B cell (primary cell): ENCODE measurements at regions of chr10 and their contacts with region 1.

Region 1: DNA sequence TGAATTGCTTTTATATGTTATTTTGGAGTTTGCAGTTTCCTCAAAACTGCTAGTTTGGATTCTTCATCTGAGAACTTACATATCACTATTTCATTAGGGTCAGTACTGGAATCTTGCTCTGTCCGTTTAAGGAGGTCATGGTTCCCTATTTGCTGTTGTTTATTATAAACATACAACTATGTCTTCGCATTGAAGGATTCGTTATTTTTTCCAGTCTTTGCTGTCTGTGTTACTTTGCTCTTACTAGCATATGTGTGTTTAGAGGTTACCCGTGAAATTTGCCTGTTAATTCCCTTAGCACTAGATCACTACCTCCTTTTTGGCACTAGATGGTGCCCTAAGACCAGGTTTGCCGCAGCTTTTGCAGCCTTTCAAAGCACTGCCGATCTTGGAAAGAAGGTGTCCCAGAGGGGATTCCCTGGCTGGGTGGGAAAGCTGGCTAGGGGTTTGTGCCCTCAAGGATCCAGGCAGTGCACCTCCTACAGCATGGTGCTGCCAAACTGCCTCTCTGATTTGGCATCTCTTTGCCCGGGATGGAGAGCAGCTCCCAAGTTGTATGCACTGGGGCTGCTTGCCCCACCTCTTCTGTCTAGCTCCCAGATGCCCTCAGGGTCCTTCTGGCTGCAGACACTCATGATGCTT is 103.1 kb upstream of the APBB1IP start:
- DNase-seq: peak; percentile 84
- ATAC-seq: peak; percentile 91
- H3K4me3 ChIP-seq: peak overlapping the region; percentile 45 to 66 (median 59)
- H3K4me3 Mint-ChIP-seq: peak overlapping the region; percentile 87
- H3K27ac ChIP-seq: no peak overlapping the region
- H3K27ac Mint-ChIP-seq: peak overlapping the region; percentile 69
- H3K4me1 ChIP-seq: peaks cover 5% of the 10 kb centered on the region in 2 donors
- H3K4me1 Mint-ChIP-seq: peaks cover 6% of the 10 kb centered on the region
- H3K27me3 ChIP-seq: no peaks in the 10 kb centered on the region
- H3K27me3 Mint-ChIP-seq: no peaks in the 10 kb centered on the region
- CTCF ChIP-seq: peak; percentile 95

Region 2: DNA sequence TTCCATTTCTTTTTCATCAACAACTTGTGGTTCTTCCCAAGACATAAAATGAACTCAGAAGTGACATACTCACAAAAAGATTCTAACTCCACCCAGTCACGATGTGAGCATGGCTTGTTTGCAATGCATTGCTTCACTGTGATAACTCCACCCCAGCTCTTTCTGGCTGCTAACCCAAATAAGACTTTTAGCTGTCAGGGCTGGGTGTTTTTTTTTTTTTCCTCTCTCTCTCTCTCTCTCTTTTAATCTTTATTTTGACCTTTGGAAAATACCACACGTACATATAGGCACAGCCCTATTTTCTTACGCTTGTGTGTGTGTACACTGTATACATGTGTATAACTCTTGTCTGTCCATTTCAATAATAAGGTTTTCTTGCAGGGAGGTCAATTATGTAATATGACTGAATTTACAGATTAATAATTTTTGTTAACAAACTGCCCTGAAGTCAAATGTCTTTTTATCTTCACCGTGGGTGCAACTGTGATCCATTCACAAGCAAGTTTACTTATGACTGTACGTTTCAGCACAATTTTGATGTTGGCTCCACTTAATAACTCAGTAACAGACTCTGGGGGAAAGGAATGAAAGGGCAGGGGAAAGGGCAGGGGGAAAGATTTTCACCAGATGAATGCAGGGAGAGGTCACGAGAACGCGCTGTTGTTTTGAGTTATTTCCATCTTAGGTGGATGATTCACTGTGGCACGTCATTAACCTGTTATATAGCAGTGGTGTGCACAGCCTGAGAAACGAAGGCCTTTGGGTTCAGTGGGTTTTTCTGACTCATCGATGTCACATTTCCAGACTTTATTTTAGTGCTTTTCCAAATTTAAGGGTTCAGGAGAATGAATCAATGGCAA is 152.2 kb after region 1 on chr10:
- CTCF ChIA-PET with region 1: no interaction called
- POLR2A ChIA-PET with region 1: no interaction called
- intact Hi-C with region 1: loop called (anchors 5 kb)
- DNase-seq: peak; percentile 24
- ATAC-seq: peak; percentile 78
- H3K4me3 ChIP-seq: no peak overlapping the region
- H3K4me3 Mint-ChIP-seq: peak overlapping the region; percentile 74
- H3K27ac ChIP-seq: peak overlapping the region; percentile 36 to 67
- H3K27ac Mint-ChIP-seq: peak overlapping the region; percentile 89
- H3K4me1 ChIP-seq: peaks cover 40 to 43% of the 10 kb centered on the region in 2 donors
- H3K4me1 Mint-ChIP-seq: peaks cover 54% of the 10 kb centered on the region
- H3K27me3 ChIP-seq: no peaks in the 10 kb centered on the region
- H3K27me3 Mint-ChIP-seq: no peaks in the 10 kb centered on the region
- CTCF ChIP-seq: no peak

Region 3: DNA sequence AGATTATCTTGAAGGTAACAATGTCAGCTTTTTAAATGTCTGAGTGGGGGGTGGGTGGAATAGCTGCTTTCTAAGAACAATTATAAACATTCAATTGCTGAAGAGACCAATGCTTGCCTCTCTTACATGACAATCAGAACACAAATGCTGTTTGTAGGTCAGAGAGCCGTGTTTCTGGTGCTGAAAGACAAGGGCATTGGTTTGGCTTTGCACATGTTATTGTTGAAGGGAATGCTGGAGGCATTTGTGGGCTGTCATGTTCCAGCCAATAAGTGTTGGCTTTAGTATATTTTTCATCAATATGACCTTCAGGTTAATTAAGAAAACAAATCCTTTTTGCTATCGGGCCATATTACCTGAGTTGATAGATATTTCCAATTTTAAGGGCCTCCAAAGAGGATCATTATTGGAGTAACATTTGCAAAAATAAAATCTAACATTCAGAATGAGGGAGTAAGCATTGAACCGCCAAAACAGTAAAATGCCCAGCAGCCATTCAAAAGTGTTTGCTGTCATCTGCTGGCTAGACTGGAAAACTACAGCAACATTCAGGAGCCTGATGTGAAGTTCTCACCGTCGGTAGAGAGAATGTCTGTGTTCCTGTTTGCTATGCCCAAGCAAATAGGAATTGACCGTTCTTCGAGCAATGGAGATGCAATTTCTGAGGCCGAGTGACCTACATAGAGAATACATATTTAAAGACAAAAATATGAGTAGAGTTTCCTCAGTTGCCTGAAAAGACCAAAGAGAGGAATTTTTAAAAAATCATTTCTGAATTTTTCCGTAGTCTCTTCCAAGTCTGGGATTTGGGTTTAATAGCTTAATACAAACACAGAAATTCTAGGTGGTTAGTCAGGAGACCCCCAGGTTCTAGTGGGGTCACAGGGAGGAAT is 221.9 kb after region 1 on chr10:
- CTCF ChIA-PET with region 1: interaction called, 144 read pairs
- POLR2A ChIA-PET with region 1: no interaction called
- intact Hi-C with region 1: loop called (anchors 1 kb)
- DNase-seq: peak; percentile 55
- ATAC-seq: peak; percentile 36
- H3K4me3 ChIP-seq: no peak overlapping the region
- H3K4me3 Mint-ChIP-seq: no peak overlapping the region
- H3K27ac ChIP-seq: peak overlapping the region in 1 of 2 donors; percentile 1
- H3K27ac Mint-ChIP-seq: peak overlapping the region; percentile 46
- H3K4me1 ChIP-seq: no peaks in the 10 kb centered on the region
- H3K4me1 Mint-ChIP-seq: no peaks in the 10 kb centered on the region
- H3K27me3 ChIP-seq: no peaks in the 10 kb centered on the region
- H3K27me3 Mint-ChIP-seq: no peaks in the 10 kb centered on the region
- CTCF ChIP-seq: peak; percentile 94

Region 4: GRCh38 chr10:26881600-26882331 is 546.7 kb after region 1 on chr10:
- CTCF ChIA-PET with region 1: interaction called, 37 read pairs
- POLR2A ChIA-PET with region 1: no interaction called
- intact Hi-C with region 1: loop called (anchors 1 kb)
- DNase-seq: peak; percentile 65
- ATAC-seq: peak; percentile 70
- H3K4me3 ChIP-seq: no peak overlapping the region
- H3K4me3 Mint-ChIP-seq: no peak overlapping the region
- H3K27ac ChIP-seq: no peak overlapping the region
- H3K27ac Mint-ChIP-seq: no peak overlapping the region
- H3K4me1 ChIP-seq: no peaks in the 10 kb centered on the region
- H3K4me1 Mint-ChIP-seq: peaks cover 1% of the 10 kb centered on the region
- H3K27me3 ChIP-seq: peaks cover 0 to 3% (median 1%) of the 10 kb centered on the region in 4 experiments
- H3K27me3 Mint-ChIP-seq: peaks cover 22% of the 10 kb centered on the region
- CTCF ChIP-seq: peak; percentile 80